Dorsolateral prefrontal cortex (tissue), 120 donors: ENCODE measurements at regions of chr14 and their contacts with region 1.

Region 1: GRCh38 chr14:76876076-76876475 is 49.9 kb downstream of the LRRC74A start:
- DNase-seq: peak in 8 of 10 donors; percentile 40 to 81 (median 72)
- H3K4me3 ChIP-seq: no peak overlapping the region
- H3K27ac ChIP-seq: no peak overlapping the region
- H3K27me3 ChIP-seq: peaks cover 0 to 2% (median 0%) of the 10 kb centered on the region in 45 donors
- CTCF ChIP-seq: peak; percentile 60 to 99 (median 95)

Region 2: GRCh38 chr14:76736514-76736913 is 139.6 kb before region 1 on chr14:
- intact Hi-C with region 1: no loop called
- DNase-seq: no peak
- H3K4me3 ChIP-seq: no peak overlapping the region
- H3K27ac ChIP-seq: no peak overlapping the region
- H3K27me3 ChIP-seq: no peaks in the 10 kb centered on the region
- CTCF ChIP-seq: no peak

Region 3: DNA sequence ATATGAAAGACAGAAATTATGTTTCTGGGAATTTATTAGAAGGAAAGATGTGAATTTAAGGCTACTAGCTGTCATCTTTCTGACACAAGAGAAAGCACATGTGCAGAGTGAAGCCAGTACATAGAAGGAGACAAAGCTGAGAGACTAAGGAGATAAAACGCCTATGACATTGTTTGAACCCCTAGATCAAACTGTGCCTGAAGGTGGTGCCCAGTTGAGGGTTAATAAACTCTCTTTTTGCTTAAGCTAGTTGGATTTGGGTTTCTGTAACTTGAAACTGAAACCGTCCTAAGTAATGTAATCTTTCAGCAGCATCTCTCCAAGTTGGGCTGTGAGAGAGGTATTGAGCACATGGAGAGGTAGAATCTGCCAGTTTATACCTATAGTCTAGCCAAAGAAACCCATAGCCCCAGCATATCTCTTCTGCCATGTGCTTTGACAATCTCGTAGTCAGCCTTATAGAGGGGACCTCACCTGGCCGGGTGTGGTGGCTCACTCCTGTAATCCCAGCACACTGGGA is 34.4 kb after region 1 on chr14:
- intact Hi-C with region 1: loop called (anchors 2 to 5 kb)
- DNase-seq: no peak
- H3K4me3 ChIP-seq: no peak overlapping the region
- H3K27ac ChIP-seq: no peak overlapping the region
- H3K27me3 ChIP-seq: no peaks in the 10 kb centered on the region
- CTCF ChIP-seq: no peak

Region 4: DNA sequence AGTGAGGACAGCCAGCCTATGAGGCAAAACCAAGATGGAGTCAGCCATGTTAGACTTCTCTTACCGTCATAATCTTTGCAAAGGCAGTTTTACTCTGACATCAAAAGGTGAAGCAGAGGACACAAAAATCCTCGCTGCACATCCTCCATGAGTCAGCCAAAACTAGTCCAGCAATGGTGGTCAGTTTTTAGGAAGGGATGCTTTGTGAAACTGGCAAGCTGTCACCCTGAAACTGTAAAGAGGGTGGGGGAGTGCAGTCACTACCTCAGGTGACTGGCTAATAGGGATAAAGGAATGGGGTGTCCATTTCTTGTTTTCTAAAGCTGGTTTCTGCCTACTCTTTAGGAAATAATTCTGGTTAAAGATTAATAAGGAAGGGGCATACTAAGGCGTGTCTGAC is 216.6 kb after region 1 on chr14:
- intact Hi-C with region 1: loop called in 1 of 2 experiments (anchors 2 kb)
- DNase-seq: no peak
- H3K4me3 ChIP-seq: no peak overlapping the region
- H3K27ac ChIP-seq: no peak overlapping the region
- H3K27me3 ChIP-seq: no peaks in the 10 kb centered on the region
- CTCF ChIP-seq: no peak

Region 5: DNA sequence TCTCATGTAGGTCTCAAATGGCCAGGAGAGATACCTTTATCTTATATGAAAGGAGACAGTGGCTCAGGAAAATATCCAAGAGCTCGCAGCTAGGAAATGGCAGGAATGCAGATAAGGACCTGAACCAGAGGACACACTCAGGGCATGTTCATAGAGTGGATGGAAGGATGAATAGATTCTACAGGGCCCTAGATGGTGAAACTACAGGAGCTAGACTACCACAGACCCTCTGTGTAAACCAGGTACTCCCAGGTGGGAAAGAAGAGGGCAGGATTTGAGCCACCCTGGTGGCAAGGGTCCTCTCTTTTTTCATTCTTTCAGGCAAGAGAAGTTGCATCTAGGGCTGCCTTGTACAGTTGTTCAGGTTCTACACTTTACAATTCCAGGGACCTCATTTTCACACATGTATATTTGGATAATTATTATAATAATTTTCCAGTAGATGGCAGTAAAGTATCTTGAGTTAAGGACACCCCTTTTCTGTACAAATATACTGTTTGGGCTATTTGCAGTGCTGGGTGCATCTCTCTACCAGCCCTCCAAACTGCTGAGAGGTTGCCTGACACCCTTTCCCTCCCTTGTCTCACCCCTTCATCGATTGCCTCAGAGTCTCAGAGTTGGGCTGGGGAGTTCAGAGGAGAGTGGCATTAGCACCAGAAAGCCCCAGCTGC is 276.0 kb after region 1 on chr14:
- intact Hi-C with region 1: loop called in 1 of 2 experiments (anchors 10 kb)
- DNase-seq: no peak
- H3K4me3 ChIP-seq: no peak overlapping the region
- H3K27ac ChIP-seq: peak overlapping the region in 12 of 59 donors; percentile 0 to 63 (median 26)
- H3K27me3 ChIP-seq: no peaks in the 10 kb centered on the region
- CTCF ChIP-seq: peak in 53 of 56 donors; percentile 28 to 67 (median 48)

Region 6: DNA sequence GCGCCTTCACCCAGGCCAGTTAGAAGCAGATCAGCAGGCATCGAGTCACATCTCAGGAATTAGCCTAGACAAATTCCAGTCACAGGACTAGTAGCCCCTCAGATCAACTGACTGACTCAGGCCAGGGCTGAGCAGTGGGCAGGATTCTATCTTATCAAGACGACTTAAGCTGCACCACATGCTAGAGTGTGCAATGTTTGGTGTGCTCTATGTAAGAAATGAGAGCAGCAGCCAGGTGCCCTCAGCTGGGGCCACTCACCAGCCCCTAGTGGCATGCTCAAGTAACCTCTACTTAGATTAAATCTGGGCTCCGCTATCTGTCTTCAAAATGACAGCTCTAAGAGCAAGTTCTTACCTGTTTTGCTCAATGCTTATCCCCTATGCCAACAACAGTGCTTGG is 414.7 kb after region 1 on chr14:
- intact Hi-C with region 1: loop called in 1 of 2 experiments (anchors 10 kb)
- DNase-seq: no peak
- H3K4me3 ChIP-seq: no peak overlapping the region
- H3K27ac ChIP-seq: no peak overlapping the region
- H3K27me3 ChIP-seq: no peaks in the 10 kb centered on the region
- CTCF ChIP-seq: no peak